HepG2 (cell line): ENCODE measurements at regions of chr1 and their contacts with region 1.

Region 1: DNA sequence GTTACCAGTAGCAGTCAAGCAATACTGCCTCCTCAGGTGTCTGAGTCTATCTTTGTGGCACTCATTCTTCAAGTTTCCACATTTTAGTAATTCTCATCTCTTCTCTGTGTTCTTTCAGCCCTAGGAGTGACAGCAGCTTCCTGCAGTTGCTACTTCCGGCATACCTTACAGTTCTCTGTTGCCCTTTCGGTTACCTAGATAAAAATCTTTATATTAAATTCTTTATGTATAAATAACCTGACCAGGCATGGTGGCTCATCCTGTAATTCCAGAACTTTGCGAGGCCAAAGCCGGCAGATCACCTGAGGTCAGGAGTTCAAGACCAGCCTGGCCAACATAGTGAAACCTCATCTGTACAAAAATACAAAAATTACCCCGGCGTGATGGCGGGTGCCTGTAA is 62.9 kb downstream of the CDKN2C start:
- DNase-seq: no peak
- ATAC-seq: no peak
- H3K4me3 ChIP-seq: no peak overlapping the region
- H3K27ac ChIP-seq: no peak overlapping the region
- H3K4me1 ChIP-seq: no peaks in the 10 kb centered on the region
- H3K27me3 ChIP-seq: no peaks in the 10 kb centered on the region; a peak in 1 of 5 replicates
- CTCF ChIP-seq: no peak
- EP300 ChIP-seq: no peak
- POLR2A ChIP-seq: no peak
- RAD21 ChIP-seq: no peak

Region 2: DNA sequence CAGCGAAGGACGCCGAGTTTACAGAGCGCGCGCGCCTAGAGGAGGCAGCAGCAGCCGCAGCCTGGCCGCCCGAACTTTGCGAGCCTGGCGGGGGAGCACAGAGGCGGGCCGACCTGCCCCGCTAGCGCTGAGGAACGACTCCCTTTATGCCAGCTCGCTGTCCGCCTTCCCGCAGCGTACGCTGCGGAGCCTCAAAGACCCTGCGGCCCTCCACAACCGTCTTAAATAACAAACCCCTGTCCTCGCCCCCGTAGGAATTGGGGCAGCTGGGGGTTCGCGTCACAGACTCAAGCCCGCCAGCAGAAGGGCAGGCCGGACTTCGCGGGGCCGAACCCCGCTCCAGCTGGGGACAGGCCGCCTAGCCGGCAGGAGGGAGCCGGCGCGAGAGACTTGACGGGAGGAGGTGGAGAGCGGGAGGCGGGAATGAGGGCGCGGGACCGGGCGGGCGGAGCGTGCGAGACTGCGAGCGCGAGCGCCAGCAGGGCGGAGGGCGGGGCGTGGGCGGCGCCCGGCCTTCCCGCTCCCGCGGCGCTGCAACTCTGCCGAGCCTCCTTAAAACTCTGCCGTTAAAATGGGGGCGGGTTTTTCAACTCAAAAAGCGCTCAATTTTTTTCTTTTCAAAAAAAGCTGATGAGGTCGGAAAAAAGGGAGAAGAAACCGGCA is 64.6 kb before region 1 on chr1:
- CTCF ChIA-PET with region 1: no interaction called
- POLR2A ChIA-PET with region 1: no interaction called
- in situ Hi-C with region 1: loop called (anchors 10 kb)
- intact Hi-C with region 1: no loop called
- DNase-seq: peak; percentile 76
- ATAC-seq: peak; percentile 89
- H3K4me3 ChIP-seq: peak overlapping the region; percentile 91 to 99 (median 98)
- H3K27ac ChIP-seq: peak overlapping the region; percentile 98
- H3K4me1 ChIP-seq: peaks cover 17% of the 10 kb centered on the region; the same call in 1 of the 2 replicates
- H3K27me3 ChIP-seq: no peaks in the 10 kb centered on the region; a peak in 1 of 5 replicates
- CTCF ChIP-seq: peak; percentile 73
- EP300 ChIP-seq: peak in 1 of 2 experiments; percentile 69; a peak in 2 of 4 replicates
- POLR2A ChIP-seq: peak; percentile 62 to 75
- RAD21 ChIP-seq: peak; percentile 64

Region 3: DNA sequence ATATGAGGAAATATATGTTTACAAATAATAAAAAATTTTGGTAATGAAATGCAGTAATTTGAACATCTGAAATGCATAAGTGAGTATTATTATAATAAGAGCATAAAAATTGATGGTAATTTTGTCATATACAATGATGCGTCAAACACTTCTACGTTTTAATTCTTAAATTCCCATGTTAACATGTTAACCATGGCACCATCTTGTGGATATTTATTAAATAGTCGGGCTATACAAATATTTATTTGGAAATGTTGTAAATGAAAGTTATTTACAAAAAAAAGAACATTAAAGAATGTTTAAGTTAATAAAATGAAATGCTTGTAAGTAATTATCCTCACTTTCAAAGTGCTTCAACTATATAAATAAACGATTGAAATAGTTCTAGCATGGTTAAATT is 11.9 kb after region 1 on chr1:
- CTCF ChIA-PET with region 1: no interaction called
- POLR2A ChIA-PET with region 1: no interaction called
- in situ Hi-C with region 1: no loop called
- intact Hi-C with region 1: no loop called
- DNase-seq: no peak
- ATAC-seq: no peak
- H3K4me3 ChIP-seq: no peak overlapping the region
- H3K27ac ChIP-seq: no peak overlapping the region
- H3K4me1 ChIP-seq: 0 out of 2 replicates have a peak, but pooled peaks cover 7% of the 10 kb centered on the region
- H3K27me3 ChIP-seq: no peaks in the 10 kb centered on the region
- CTCF ChIP-seq: no peak
- EP300 ChIP-seq: no peak
- POLR2A ChIP-seq: no peak
- RAD21 ChIP-seq: no peak